MCF 10A (cell line): ENCODE measurements at regions of chr3 and their contacts with region 1.

Region 1: DNA sequence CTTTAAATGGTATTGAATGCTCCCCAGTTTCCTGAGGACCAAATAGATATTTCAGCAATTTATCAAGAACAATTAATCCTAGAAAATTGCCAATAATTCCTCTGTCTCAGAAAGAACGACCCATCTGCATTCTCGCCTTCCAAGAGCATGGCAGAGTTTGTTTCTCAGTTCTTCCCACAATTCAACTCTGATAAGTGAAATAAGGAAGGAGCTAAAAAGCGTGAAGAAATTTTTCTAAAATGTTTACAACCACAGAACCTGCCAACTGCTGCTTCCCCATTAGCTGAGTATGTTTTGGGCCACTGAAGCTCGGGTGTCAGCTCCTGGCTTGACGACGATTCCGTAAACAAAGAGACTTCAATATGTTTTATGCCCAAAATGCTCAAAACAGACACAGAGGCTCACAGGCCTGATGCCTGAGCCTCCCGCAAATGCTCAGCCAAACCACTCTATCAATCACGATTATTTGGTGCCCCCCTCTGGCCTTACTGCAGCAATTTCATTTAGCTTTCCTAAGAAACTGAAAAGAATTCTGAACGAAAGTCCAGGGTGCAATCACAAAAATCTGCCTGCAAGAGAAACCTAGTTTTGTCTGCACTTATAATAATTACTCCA is 259.2 kb upstream of the CCDC54 start:
- DNase-seq: peak; percentile 65
- H3K4me3 Mint-ChIP-seq: no peak overlapping the region
- H3K27ac Mint-ChIP-seq: peak overlapping the region; percentile 12
- H3K4me1 Mint-ChIP-seq: no peaks in the 10 kb centered on the region
- H3K27me3 Mint-ChIP-seq: no peaks in the 10 kb centered on the region
- CTCF ChIP-seq: peak; percentile 55

Region 2: GRCh38 chr3:106629215-106629832 is 488.7 kb before region 1 on chr3:
- CTCF ChIA-PET with region 1: no interaction called
- POLR2A ChIA-PET with region 1: no interaction called
- intact Hi-C with region 1: loop called (anchors 5 kb)
- DNase-seq: no peak
- H3K4me3 Mint-ChIP-seq: no peak overlapping the region
- H3K27ac Mint-ChIP-seq: no peak overlapping the region
- H3K4me1 Mint-ChIP-seq: peaks cover 20% of the 10 kb centered on the region
- H3K27me3 Mint-ChIP-seq: no peaks in the 10 kb centered on the region
- CTCF ChIP-seq: no peak